HEK293 (cell line): ENCODE measurements at regions of chr22 and their contacts with region 1.

Region 1: DNA sequence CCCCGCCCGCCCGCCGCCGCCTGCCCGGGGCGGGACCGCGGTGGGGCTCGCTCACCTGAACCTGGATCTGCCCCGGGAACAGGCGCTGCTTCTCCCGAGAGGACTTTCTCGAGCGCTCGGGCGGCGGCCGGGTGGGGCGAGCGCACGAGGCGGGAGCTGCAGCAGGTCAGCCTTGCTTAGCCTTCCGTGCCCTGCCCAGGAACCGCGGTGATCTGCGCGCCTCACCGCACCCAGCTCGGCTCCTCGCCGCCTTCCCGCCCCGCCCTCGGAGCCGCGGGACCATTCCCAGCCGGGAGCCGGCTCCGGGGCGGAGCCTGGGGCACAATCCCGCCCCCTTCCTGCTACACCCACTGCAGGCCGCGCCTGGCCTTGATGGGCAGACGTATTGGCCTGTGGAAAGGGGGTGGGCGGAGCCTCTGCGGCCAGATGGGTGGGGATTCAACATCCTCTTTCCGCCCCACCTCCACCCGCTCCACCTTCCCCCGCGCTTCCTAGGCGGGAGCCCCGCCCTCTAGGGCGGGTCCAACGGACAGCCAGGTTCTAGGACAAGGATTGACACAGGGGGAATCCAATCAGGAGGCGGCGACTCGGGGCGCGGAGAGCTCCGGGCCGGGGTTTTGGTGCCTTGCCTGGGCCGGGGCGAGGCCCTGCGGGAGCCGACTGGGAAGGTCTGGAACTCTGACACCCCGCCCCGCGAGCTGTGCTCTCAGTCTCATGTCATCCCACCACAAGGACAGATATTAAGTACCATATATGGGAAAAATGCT is at the start of gene MYH9:
- H3K4me3 ChIP-seq: peak within 1 kb of the TSS; percentile 94
- H3K27ac ChIP-seq: peak within 1 kb of the TSS; percentile 95
- H3K4me1 ChIP-seq: peaks cover 12% of the 10 kb centered on the region; the same call in 1 of the 2 replicates
- CTCF ChIP-seq: no peak

Region 2: DNA sequence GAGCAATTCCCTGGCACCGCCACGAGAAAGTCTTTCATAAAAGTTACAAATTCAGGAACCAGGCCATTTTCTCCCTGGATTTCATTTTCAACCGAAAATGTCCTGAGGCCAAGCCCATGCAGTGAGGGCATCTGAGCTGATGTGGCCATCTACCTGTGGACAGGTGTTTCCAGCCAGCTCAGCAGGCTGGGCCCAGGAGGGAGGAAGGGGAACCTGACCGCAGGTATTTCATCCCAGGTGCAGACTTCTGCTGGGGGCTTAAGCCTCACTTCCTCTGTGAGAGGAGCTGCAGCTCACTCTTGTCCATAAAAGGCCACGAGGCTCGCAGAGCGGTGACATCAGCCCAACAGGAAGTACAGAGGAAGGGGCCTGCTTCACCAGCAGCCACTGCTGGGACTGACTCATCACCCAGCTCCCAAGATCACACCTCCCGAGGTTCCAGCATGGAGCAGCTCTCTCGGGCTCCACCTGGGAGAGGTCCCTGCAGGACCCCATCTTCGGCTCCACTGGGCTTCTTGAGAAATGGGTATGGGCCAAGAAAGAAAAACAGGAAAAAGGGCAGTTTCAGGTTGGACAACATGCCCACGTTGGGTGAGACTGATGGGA is 56.5 kb before region 1 on chr22:
- CTCF ChIA-PET with region 1: interaction called, 3 read pairs
- POLR2A ChIA-PET with region 1: interaction called, 45 read pairs
- H3K4me3 ChIP-seq: no peak overlapping the region
- H3K27ac ChIP-seq: peak overlapping the region; percentile 85
- H3K4me1 ChIP-seq: peaks cover 48% of the 10 kb centered on the region
- CTCF ChIP-seq: no peak; the same call in 1 of the 2 replicates

Region 3: GRCh38 chr22:36374603-36375024 is 13.3 kb before region 1 on chr22:
- CTCF ChIA-PET with region 1: interaction called, 3 read pairs
- POLR2A ChIA-PET with region 1: interaction called, 33 read pairs
- H3K4me3 ChIP-seq: no peak overlapping the region
- H3K27ac ChIP-seq: no peak overlapping the region
- H3K4me1 ChIP-seq: peaks cover 17% of the 10 kb centered on the region
- CTCF ChIP-seq: no peak

Region 4: DNA sequence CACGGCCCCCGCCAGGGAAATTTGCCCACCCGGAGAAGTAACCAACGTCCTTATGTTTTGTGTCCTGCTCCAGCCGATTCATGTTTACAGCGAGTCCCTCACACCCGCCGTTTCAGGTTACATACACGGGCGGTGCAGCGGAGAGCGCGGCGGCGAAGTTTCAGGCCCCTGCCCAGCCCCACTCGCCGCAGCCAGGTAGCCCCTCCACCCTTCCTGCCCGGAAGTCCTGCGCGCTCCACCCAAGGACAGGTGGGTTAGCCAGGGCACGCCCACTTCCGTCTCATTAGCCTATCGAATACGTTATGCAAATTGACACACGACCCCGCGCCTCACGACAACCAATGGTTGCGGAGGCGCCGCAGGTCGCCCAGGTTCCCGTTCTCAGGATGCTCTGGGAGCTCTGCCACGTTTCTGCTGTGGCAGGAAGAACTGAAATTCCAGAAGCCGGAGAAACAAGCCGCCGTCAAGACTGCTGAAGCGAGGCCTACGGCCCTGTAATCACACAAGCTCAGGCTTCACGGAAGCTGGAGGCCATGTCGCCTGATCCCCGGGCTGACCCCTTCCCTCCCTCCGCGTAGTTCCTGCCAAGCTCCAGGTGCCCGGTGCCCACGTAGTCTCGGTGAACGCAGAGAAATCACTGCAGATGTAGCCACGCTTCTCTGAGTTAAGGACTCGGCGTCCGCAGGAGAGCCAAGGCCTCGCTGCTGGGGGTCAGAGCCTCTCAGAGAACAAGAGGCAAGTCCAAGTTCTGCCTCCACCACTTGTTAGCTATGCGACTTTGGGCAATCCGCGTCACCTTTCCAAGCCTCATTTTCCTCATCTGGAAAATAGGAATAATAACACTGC is 22.2 kb after region 1 on chr22:
- CTCF ChIA-PET with region 1: interaction called, 4 read pairs
- POLR2A ChIA-PET with region 1: interaction called, 28 read pairs
- H3K4me3 ChIP-seq: peak overlapping the region; percentile 42
- H3K27ac ChIP-seq: peak overlapping the region; percentile 78
- H3K4me1 ChIP-seq: peaks cover 5% of the 10 kb centered on the region; the same call in 1 of the 2 replicates
- CTCF ChIP-seq: peak; percentile 35; the same call in 1 of the 2 replicates

Region 5: DNA sequence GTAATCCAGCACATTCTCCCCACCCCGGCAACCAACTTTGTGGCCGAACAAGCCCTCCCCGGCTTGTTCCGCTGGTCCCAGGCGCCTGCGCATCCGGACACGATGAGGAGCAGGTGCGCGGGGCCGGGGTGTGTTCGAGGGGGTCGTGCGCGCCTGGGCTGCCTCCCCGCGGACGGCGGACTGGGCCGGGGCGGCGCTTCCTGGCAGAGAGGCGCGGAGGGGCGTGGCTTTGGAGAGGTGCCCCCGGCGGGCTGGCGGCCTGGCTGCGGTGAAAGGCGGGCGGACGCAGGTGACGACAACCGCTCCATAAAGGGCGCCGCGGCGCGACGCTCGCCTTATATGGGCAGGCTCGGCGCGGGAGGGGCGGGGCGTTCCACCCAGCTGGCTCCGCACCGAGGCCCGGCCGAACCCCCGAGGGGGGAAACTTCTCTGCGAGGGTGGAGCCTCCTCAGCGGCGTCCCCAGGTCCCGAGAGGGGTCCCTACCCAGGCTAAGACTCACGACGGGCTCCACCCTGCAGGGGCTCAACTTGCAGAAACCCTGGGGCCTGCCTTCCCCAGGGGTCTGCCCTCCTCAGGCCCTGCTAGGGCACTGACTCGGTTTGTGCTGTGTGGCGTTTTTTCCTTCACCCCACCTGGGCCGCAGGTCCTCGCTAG is 67.1 kb after region 1 on chr22:
- CTCF ChIA-PET with region 1: interaction called, 4 read pairs
- POLR2A ChIA-PET with region 1: interaction called, 15 read pairs
- H3K4me3 ChIP-seq: peak overlapping the region; percentile 40
- H3K27ac ChIP-seq: peak overlapping the region; percentile 63
- H3K4me1 ChIP-seq: peaks cover 13% of the 10 kb centered on the region
- CTCF ChIP-seq: peak; percentile 83

Region 6: GRCh38 chr22:36481393-36482168 is 93.6 kb after region 1 on chr22 and contains the start of gene TXN2:
- CTCF ChIA-PET with region 1: interaction called, 6 read pairs
- POLR2A ChIA-PET with region 1: interaction called, 28 read pairs
- H3K4me3 ChIP-seq: peak within 1 kb of the TSS; percentile 49
- H3K27ac ChIP-seq: peak within 1 kb of the TSS; percentile 95
- H3K4me1 ChIP-seq: no peaks in the 10 kb centered on the region; the same call in 1 of the 2 replicates
- CTCF ChIP-seq: no peak

Region 7: DNA sequence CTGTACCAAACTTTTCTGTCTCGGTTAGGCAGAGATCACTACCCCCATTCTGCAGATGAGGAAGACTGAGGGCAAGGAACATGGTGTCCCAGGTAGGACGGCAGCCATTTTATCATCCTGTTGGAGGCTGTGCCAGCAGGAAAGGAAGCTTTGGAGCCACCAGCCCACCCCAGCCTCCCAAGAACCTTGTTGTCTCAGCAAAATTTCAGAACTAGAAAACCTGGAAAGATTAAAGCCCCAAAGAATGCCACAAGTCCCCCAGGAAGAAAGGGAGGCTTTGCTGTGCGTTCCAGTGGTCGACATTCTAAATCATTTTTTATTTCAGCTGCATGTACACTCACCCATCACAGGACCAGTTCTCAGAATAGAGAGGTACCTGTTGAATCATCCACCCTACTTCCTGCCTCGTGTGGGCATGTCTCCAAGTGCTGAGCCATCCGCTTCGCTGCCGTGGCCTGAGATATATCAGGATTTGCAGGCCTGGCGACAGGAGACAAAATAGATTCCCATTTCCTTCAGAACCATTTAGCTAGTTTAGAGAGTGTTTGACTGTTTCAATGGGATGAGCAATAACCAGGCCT is 154.0 kb after region 1 on chr22:
- CTCF ChIA-PET with region 1: no interaction called
- POLR2A ChIA-PET with region 1: no interaction called
- H3K4me3 ChIP-seq: no peak overlapping the region
- H3K27ac ChIP-seq: no peak overlapping the region
- H3K4me1 ChIP-seq: no peaks in the 10 kb centered on the region
- CTCF ChIP-seq: no peak

Region 8: DNA sequence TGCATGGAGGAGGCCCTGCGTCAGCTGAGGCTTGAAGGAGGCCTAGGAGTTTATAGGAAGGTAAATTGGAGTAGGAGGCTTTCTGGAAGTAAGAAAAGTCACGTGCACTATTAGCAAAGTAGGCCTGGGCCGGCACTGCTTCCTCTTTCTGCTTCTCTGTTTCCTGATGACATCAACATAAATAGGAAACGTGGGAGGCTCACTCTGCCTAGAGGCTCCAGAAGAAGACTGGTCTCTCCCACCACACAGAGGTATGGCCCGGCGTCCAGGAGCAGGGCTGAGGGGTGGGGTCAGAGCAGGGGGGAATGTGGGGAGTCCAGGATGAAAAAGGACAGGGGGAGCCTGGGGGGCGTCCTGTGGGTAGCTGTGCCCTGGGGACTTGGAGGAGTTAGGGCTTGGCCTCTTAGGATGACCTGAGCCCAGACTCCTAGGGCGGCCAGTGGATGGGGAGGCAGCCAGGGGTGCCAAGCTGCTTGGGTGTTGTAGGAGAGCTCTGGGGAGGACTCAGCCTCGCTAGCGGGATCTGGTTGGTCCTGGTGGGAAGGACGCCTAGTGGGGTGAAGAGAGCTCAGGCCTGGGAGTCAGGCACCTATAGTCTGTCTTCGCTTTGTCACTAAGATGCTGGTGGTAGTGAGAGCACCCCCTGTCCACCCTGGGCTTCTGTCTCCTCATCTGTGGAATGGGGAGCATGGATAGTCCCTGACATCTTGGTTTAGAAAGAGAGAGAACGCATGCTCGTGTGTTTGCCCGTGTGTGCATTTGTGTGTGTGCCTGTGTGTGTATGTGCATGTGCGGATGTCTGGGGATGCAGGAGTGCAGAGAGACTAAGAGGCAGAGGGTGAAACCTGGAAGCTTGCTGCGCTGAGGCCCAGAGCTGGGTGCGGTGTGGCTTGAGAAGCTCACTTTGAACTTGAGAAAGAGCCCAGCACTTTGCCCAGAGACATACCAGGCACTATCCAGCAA is 525.8 kb after region 1 on chr22 and contains the start of gene CSF2RB:
- CTCF ChIA-PET with region 1: no interaction called
- POLR2A ChIA-PET with region 1: no interaction called
- H3K4me3 ChIP-seq: no peak within 1 kb of the TSS
- H3K27ac ChIP-seq: no peak within 1 kb of the TSS
- H3K4me1 ChIP-seq: no peaks in the 10 kb centered on the region
- CTCF ChIP-seq: no peak